ENCODE measurements at regions of chr3 and their contacts with region 1.

Region 1: GRCh38 chr3:138620431-138620830 is 11.9 kb downstream of the FAIM start:
- DNase-seq: no peak
- ATAC-seq: no peak
- H3K4me3 ChIP-seq: no peak overlapping the region
- H3K27ac ChIP-seq: no peak overlapping the region
- H3K4me1 ChIP-seq: no peaks in the 10 kb centered on the region
- H3K27me3 ChIP-seq: no peaks in the 10 kb centered on the region
- CTCF ChIP-seq: no peak
- POLR2A ChIP-seq: no peak

Region 2: GRCh38 chr3:138640537-138640936 is 20.1 kb after region 1 on chr3:
- intact Hi-C with region 1: loop called in 1 of 10 experiments (anchors 2 kb)
- DNase-seq: no peak
- ATAC-seq: no peak
- H3K4me3 ChIP-seq: no peak overlapping the region
- H3K27ac ChIP-seq: no peak overlapping the region
- H3K4me1 ChIP-seq: no peaks in the 10 kb centered on the region
- H3K27me3 ChIP-seq: no peaks in the 10 kb centered on the region
- CTCF ChIP-seq: no peak
- POLR2A ChIP-seq: no peak

Region 3: DNA sequence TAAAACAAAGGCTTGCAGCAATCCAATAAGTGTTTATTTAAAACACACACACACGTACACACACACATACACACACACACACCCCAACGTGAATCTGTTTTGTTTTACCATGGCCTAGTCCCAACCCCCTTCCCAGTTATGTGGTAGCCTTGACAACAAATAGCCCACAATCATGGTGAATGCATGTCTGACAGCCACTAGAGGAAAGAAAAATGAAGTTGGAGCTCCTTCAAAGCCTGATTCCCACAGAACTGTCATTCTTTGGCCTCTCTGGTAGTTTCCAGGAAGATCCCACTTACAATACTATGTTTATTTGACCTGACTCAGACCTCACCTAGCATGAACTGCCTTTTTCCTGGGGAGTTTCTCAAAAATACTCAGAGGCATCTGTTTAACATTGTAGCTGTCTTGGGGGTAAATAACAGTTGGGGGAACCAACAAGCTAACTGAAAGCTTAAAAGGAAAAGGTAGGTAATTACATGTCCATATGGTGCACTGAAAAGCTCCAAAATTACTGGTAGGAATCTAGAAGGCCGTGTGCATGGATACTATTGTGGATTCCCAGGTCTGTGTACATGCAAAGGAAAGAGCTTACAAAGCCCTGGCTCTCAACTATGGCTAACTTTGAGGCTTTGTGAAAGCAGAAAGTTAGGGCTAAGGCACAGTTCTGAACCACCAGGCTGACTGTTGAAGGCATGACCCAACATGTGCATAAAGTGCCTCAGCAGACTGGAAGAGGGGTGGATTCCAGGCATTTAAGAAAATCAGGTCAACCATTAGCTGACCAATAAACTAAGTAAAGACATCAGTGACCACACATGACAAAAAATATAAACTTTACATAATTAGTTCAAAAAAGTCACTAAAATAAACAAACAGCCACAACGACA is 53.5 kb after region 1 on chr3:
- intact Hi-C with region 1: no loop called
- DNase-seq: no peak
- ATAC-seq: no peak
- H3K4me3 ChIP-seq: no peak overlapping the region
- H3K27ac ChIP-seq: no peak overlapping the region
- H3K4me1 ChIP-seq: peaks cover 0 to 14% (median 0%) of the 10 kb centered on the region in 12 donors
- H3K27me3 ChIP-seq: no peaks in the 10 kb centered on the region
- CTCF ChIP-seq: no peak
- POLR2A ChIP-seq: no peak

Measured in heart left ventricle (tissue), 16 donors.